ENCODE measurements at regions of chr20 and their contacts with region 1.

Region 1: DNA sequence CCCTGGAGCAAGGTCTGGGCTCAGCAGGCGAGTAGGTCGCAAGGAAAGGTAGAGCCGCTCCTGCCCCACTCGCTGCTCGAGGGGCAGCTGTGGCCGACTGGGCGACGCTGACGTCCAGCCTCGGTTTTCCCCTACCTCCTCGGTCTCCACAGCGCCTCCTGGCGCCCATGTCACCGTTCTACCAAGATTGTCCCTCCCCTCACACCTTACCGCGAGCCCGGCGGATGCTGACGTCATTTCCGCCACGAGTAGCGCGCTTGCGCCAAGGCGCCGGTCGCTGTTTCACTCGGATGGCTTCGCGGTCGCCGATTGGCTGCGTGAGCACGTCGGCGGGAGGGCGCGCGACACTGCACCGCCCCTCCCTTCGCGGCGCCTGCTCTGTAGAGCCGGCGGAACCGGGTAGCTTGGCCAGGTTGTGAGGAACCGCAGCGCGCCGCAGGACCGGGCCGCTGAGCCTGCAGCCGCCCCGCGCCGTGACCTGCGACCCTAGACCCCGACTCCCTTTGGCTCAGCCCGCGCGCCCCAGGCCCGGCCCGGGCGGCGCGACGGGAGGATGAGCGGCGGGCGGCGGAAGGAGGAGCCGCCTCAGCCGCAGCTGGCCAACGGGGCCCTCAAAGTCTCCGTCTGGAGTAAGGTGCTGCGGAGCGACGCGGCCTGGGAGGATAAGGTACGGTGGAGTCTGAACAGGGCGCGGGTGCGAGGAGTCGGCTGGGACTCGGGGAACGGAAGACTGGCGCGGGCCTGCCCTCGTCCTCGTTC is at the start of gene RAB5IF:
- DNase-seq: peak; percentile 100
- H3K4me3 Mint-ChIP-seq: peak within 1 kb of the TSS; percentile 100
- H3K27ac Mint-ChIP-seq: peak within 1 kb of the TSS; percentile 98
- H3K4me1 Mint-ChIP-seq: peaks cover 21% of the 10 kb centered on the region
- H3K27me3 Mint-ChIP-seq: no peaks in the 10 kb centered on the region
- total RNA-seq, gene RAB5IF: 114 and 122 TPM in 2 replicates

Region 2: GRCh38 chr20:36153736-36154699 is 451.6 kb before region 1 on chr20:
- intact Hi-C with region 1: no loop called
- DNase-seq: peak; percentile 69
- H3K4me3 Mint-ChIP-seq: peak overlapping the region; percentile 50
- H3K27ac Mint-ChIP-seq: no peak overlapping the region
- H3K4me1 Mint-ChIP-seq: peaks cover 3% of the 10 kb centered on the region
- H3K27me3 Mint-ChIP-seq: peaks cover 38% of the 10 kb centered on the region

Region 3: DNA sequence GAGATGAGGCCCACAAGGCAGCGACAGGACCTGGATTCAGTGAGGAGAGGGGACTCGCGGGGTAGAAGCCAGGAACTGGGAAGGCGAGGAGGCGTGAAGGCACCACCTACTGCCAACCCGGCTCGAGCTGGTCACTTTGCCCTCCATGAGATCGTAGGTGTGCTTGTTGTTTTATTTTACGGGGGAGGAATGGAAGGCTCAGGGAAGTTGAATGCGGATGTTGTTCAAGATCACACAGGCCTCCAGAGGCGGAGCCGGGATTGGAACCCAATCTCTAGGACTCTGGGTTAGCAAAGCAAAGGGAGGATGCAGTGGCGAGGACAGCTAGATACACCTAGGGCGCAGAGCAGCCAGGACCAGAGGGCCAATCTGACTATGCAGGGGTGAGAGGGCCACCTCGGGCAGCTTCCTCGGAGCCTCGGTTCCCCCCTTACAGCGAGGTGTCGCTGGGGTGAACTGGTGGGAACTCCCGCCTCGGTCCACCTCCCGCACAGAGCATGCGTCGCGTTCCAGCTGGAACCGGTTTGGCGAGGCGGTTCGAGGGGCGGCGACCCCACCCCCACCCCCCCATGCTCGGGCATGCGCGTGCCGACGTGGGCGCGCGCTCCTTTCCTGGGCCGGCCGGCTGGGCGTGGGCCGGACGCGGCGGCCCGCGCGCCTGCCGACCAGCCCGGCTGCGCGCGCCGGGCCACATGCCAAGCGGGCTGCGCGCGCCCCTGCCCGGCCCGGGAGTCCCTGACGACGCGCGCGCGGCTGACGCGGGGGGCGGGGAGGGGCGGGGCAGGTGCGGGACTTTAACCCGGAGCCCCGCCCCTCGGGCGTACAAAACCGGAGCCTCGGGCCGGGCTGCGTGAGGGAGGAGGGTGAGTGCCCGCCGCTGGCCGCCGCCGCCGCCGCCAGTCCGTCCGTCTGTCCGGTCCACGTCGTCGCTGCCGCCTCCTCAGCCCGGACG is 144.7 kb before region 1 on chr20:
- intact Hi-C with region 1: loop called (anchors 10 kb)
- DNase-seq: peak; percentile 95
- H3K4me3 Mint-ChIP-seq: peak overlapping the region; percentile 74
- H3K27ac Mint-ChIP-seq: peak overlapping the region; percentile 82
- H3K4me1 Mint-ChIP-seq: peaks cover 42% of the 10 kb centered on the region
- H3K27me3 Mint-ChIP-seq: peaks cover 7% of the 10 kb centered on the region

Region 4: DNA sequence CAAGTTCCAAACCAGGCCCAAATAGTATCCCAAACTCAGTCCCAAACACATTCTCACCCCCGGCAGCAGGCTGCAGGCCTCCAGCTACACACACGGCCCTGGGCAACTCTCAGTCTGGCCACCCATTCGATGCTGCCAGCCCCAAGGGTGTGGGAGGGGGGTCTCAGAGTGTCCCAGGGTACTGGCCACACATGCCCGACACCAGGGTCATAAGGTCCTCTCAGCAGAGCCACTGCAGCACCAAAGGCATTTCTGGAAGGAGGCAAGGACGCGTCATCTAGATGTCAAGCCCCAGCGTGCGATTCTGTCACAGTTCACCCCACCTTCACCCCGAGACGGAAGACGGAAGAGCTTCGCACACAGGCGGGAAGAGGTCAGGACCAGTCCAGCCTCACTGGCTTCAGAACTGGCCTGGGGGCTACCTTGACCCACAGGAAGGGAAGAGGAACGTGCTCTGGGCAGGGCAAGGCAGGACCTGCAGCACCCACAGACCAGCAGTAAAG is 54.7 kb before region 1 on chr20:
- intact Hi-C with region 1: loop called (anchors 1 kb)
- DNase-seq: no peak
- H3K4me3 Mint-ChIP-seq: no peak overlapping the region
- H3K27ac Mint-ChIP-seq: no peak overlapping the region
- H3K4me1 Mint-ChIP-seq: no peaks in the 10 kb centered on the region
- H3K27me3 Mint-ChIP-seq: no peaks in the 10 kb centered on the region

Region 5: DNA sequence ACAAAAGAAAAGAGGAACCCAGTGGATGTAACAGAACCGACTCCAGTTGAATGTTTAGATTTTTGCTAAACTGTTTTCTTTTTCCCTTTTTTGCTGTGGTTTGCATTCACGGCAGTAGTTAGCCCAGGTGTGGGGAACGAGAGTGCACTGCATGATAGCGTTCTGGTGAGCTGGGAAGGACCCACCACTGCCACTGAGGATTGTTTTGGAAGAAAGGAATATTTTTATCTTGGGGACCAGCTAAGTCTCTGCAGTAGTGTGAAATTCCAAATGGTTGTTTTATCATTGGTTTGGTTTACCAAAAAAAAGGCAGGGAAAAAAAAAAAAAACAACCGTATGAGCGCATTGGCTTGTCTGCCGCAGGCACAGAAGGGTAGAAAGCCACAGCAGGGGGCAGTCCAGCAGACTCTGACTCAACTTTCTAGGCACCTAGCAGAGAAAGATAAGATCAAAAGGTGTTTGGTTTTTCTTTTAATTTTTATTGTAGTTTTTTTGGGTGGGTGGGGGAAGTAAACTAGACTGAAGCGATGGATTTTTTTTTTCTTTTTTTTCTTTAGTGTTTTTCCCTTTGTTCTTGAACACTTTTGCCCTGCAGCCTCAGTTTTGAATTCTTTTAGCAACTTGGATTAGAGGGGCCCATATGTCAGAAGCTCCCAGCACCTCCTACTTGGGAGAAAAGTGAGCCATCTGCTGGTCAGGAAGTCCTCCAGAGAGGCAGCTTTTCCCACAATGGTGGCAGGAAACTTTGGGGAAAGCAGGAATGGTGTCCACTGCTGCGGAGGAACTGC is 13.5 kb before region 1 on chr20:
- intact Hi-C with region 1: loop called (anchors 1 kb)
- DNase-seq: peak; percentile 83
- H3K4me3 Mint-ChIP-seq: peak overlapping the region; percentile 65
- H3K27ac Mint-ChIP-seq: peak overlapping the region; percentile 77
- H3K4me1 Mint-ChIP-seq: peaks cover 53% of the 10 kb centered on the region
- H3K27me3 Mint-ChIP-seq: no peaks in the 10 kb centered on the region

Region 6: GRCh38 chr20:36745927-36746659 is 140.5 kb after region 1 on chr20 and contains the start of gene NDRG3:
- intact Hi-C with region 1: loop called (anchors 2 kb)
- DNase-seq: peak; percentile 97
- H3K4me3 Mint-ChIP-seq: peak within 1 kb of the TSS; percentile 93
- H3K27ac Mint-ChIP-seq: peak within 1 kb of the TSS; percentile 89
- H3K4me1 Mint-ChIP-seq: peaks cover 17% of the 10 kb centered on the region
- H3K27me3 Mint-ChIP-seq: no peaks in the 10 kb centered on the region
- total RNA-seq, gene NDRG3: 24.7 and 25.3 TPM in 2 replicates

Measured in activated CD4-positive, alpha-beta T cell treated with anti-CD3 and anti-CD28 coated beads, Interleukin-2, amount 10 ng/mL, durations not matched to agents 24 days and 14 days (primary cell).